ENCODE measurements at regions of chr18 and their contacts with region 1.

Region 1: GRCh38 chr18:58761241-58761969 is 90.1 kb downstream of the MALT1 start:
- DNase-seq: no peak
- ATAC-seq: peak; percentile 43
- H3K4me3 Mint-ChIP-seq: no peak overlapping the region
- H3K27ac Mint-ChIP-seq: peak overlapping the region; percentile 20
- H3K4me1 Mint-ChIP-seq: peaks cover 27% of the 10 kb centered on the region
- H3K27me3 Mint-ChIP-seq: peaks cover 6% of the 10 kb centered on the region
- CTCF ChIP-seq: no peak

Region 2: GRCh38 chr18:57727952-57728807 is 1033.2 kb before region 1 on chr18:
- CTCF ChIA-PET with region 1: no interaction called
- POLR2A ChIA-PET with region 1: no interaction called
- intact Hi-C with region 1: no loop called
- DNase-seq: no peak
- ATAC-seq: peak; percentile 85
- H3K4me3 Mint-ChIP-seq: peak overlapping the region; percentile 0
- H3K27ac Mint-ChIP-seq: peak overlapping the region; percentile 42
- H3K4me1 Mint-ChIP-seq: peaks cover 45% of the 10 kb centered on the region
- H3K27me3 Mint-ChIP-seq: no peaks in the 10 kb centered on the region
- CTCF ChIP-seq: no peak

Region 3: DNA sequence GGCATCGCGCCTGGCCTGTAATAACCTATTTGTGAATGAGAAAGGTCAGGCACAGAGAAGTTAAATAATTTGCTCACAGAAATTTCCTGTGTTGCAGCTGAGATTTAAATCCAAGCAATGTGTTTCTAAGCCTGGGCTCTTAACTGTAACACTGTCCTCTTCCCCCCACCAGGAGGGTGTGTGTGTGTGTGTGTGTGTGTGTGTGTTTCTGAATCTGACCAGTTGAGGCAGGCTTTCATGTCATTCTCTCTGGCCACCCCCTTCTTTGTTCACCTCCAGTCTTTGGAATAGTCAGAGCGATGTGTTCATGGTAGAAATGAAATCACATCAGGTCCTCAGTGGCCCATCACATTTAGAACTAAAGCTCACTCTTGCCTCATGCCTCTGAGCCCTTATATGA is 636.2 kb before region 1 on chr18:
- CTCF ChIA-PET with region 1: interaction called, 6 read pairs
- POLR2A ChIA-PET with region 1: no interaction called
- intact Hi-C with region 1: loop called (anchors 5 kb)
- DNase-seq: no peak
- ATAC-seq: no peak
- H3K4me3 Mint-ChIP-seq: no peak overlapping the region
- H3K27ac Mint-ChIP-seq: no peak overlapping the region
- H3K4me1 Mint-ChIP-seq: no peaks in the 10 kb centered on the region
- H3K27me3 Mint-ChIP-seq: no peaks in the 10 kb centered on the region
- CTCF ChIP-seq: no peak

Region 4: DNA sequence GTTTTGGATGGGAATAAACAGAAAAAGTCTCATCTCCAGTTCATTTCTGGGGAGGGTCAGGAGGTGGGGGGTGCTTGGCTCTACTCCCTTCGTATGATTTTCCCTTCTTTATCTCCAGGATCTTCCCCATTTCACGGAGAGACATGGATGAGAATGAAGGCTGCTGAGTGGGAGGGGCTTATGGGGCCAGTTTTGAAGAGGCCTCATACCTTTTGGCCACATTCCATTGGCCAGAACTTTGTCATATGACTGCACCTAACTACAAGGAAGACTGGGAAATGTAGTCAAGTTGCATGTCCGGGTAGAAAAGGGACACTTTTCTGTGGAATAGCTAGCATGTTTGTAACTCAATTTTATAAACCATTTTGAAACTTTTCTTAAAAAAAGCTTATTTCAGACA is 599.7 kb before region 1 on chr18:
- CTCF ChIA-PET with region 1: no interaction called
- POLR2A ChIA-PET with region 1: no interaction called
- intact Hi-C with region 1: no loop called
- DNase-seq: no peak
- ATAC-seq: no peak
- H3K4me3 Mint-ChIP-seq: no peak overlapping the region
- H3K27ac Mint-ChIP-seq: no peak overlapping the region
- H3K4me1 Mint-ChIP-seq: no peaks in the 10 kb centered on the region
- H3K27me3 Mint-ChIP-seq: no peaks in the 10 kb centered on the region
- CTCF ChIP-seq: no peak

Region 5: GRCh38 chr18:58195278-58195765 is 566.1 kb before region 1 on chr18:
- CTCF ChIA-PET with region 1: interaction called, 3 read pairs
- POLR2A ChIA-PET with region 1: no interaction called
- intact Hi-C with region 1: loop called (anchors 5 kb)
- DNase-seq: peak; percentile 34
- ATAC-seq: peak; percentile 68
- H3K4me3 Mint-ChIP-seq: peak overlapping the region; percentile 85
- H3K27ac Mint-ChIP-seq: peak overlapping the region; percentile 54
- H3K4me1 Mint-ChIP-seq: peaks cover 25% of the 10 kb centered on the region
- H3K27me3 Mint-ChIP-seq: peaks cover 2% of the 10 kb centered on the region
- CTCF ChIP-seq: no peak

Region 6: DNA sequence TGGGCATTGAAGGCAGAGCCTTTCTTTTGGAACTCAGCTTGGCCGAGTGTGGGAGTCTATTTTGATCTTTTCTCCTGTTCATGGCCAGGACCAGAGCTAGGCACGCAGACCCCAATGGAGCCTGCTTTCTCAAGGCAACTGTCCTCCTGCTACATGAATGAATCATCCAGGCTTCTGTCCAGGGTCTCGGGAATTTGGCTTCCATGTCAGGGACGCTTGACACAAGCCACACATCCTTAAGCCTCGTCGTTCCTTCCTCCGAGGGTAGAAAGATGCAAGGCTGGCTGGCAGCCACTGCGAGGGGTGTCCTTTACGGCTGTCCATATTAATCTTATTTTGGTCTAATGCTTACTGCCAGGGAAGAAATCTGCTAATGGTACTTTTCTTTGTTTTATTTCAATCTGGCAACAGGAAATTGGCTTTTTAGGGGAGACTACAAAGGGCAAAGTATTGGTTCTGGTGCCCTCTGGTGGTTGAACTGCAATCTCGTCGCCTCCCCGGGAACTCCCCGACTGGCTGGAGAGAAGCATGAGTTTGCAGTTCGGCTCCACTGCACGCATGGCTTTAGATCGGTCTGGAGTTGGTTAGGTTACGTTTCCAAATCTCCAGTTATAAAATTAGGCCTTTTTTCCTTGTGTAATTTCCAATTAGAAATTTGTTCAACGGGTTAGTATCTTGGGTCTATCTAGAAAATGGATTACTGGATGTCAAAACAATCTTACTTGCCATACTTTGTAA is 267.7 kb before region 1 on chr18:
- CTCF ChIA-PET with region 1: interaction called, 36 read pairs
- POLR2A ChIA-PET with region 1: no interaction called
- intact Hi-C with region 1: loop called (anchors 1 kb)
- DNase-seq: peak; percentile 27
- ATAC-seq: peak; percentile 87
- H3K4me3 Mint-ChIP-seq: no peak overlapping the region
- H3K27ac Mint-ChIP-seq: no peak overlapping the region
- H3K4me1 Mint-ChIP-seq: peaks cover 7% of the 10 kb centered on the region
- H3K27me3 Mint-ChIP-seq: peaks cover 37% of the 10 kb centered on the region
- CTCF ChIP-seq: peak; percentile 55

Region 7: DNA sequence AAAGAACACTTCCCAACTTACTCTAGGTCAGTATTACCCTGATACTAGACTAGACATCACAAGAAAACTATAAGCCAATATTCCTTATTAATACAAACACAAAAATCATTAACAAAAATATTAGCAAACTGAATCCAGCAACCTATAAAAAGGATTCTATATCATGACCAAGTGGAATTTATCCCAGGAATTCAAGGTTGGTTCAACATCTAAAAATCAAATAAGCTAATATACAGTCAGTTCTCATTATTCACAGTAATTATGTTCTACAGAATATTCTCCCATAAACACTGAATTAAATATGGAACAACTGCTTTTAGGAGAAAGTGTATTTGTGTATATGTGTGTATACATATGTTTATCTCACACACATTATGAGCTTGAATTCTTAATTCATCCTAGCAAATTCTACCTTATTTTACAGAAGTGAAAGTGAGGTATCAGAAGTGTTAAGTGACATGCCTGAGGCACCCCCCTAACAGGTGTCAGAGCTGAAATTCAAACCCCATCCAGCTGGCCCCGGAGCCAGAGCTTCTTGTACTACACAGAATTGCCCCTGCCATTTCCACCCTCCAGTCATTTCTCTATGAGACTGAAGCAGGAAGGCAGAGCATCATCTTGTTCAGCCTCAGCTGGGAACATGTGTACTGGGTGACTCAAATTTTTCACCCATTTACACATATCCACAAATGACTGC is 12.4 kb before region 1 on chr18:
- CTCF ChIA-PET with region 1: interaction called, 32 read pairs
- POLR2A ChIA-PET with region 1: no interaction called
- intact Hi-C with region 1: no loop called
- DNase-seq: no peak
- ATAC-seq: peak; percentile 21
- H3K4me3 Mint-ChIP-seq: no peak overlapping the region
- H3K27ac Mint-ChIP-seq: no peak overlapping the region
- H3K4me1 Mint-ChIP-seq: peaks cover 11% of the 10 kb centered on the region
- H3K27me3 Mint-ChIP-seq: no peaks in the 10 kb centered on the region
- CTCF ChIP-seq: no peak

Measured in activated B cell treated with CpG ODN at 0.5 μM for 24 hours (primary cell).